ENCODE measurements at regions of chr9 and their contacts with region 1.

Region 1: GRCh38 chr9:37415011-37415719 is 7.3 kb upstream of the GRHPR start:
- DNase-seq: peak; percentile 76
- CTCF ChIP-seq: peak; percentile 81

Region 2: DNA sequence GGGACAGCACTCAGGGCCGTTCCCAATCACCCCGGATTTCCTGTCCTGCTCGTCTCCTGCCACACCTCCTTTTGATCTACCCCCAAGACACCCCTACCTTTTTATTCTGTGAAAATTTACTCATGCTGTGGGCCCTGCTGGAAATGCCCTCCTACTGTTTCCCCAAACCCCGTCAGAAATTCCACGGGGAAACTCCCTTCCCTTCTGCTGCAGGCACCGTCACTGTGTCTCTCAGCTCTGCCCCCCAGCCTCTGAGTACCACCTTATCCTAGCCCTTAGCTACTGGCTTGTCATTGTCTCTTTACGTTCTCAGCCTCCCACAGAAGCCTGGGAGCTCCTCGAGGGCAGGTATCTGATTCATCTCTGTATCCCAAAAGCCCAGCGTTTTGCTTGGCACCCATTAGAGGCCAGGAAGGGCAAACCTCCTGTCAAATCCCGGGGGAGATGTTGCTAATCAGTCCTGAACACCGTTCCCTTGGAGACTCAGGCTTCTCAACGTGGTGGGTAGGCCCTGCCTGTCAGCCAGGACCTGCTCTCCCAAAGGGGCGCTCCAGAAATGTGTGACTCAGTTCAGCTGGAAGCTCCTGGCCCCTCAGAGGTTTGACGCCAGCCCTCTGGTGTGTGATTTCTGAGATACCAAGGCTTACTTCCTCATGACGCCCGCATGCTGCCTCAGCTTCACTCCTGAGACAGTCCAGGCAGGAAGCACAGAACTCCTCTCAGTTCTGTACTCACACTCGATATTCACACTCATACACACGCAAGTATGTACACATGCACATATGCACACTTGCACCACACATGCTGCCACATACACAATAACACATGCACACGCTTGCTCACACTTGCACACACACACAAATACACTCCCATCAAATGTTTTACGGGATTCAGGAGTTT is 43.4 kb before region 1 on chr9:
- CTCF ChIA-PET with region 1: interaction called, 235 read pairs
- POLR2A ChIA-PET with region 1: interaction called, 12 read pairs
- DNase-seq: no peak
- CTCF ChIP-seq: no peak

Region 3: DNA sequence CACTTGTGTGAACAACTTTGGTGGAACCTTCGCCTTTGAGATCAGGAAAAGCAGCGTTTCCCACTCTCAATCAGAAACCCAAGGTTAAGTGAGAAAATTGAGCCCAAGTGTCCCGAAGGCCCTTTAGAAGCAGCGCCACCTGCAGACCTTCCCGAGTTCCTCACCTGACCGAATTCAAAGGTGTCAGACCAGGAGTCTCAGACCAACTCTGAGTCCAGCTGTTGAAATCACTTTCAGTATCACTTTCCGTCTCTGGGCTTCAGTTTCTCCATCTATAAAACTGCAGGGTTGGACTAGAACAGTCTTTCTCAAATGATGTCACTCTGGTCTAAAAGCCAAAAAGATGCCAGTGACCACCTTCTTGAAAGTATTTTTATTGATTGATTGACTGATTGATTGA is 24.4 kb before region 1 on chr9:
- CTCF ChIA-PET with region 1: interaction called, 359 read pairs
- POLR2A ChIA-PET with region 1: interaction called, 3 read pairs
- DNase-seq: peak; percentile 83
- CTCF ChIP-seq: peak; percentile 75

Region 4: DNA sequence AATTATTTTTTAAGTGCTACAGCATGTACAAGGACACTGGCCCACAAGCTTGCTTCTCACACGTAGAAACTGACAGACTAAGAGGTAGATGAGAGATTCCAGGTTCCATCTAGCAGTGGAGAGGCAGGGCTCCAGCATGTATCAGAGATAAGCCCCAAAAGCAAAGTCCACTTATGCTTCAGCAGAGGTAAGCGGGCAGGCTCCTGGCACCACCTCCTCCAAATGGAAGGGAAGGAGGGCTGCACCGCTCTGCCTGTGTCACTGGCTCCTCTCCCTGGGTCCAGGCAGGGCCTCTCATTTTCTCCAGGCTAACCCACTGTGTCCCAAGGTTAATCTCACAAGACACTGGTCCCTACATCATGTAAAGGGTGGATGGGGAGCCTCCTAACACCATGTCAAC is 23.2 kb after region 1 on chr9:
- CTCF ChIA-PET with region 1: interaction called, 15 read pairs
- POLR2A ChIA-PET with region 1: interaction called, 3 read pairs
- DNase-seq: no peak
- CTCF ChIP-seq: no peak

Measured in GM10248 (cell line).